ENCODE measurements at regions of chr7 and their contacts with region 1.

Region 1: DNA sequence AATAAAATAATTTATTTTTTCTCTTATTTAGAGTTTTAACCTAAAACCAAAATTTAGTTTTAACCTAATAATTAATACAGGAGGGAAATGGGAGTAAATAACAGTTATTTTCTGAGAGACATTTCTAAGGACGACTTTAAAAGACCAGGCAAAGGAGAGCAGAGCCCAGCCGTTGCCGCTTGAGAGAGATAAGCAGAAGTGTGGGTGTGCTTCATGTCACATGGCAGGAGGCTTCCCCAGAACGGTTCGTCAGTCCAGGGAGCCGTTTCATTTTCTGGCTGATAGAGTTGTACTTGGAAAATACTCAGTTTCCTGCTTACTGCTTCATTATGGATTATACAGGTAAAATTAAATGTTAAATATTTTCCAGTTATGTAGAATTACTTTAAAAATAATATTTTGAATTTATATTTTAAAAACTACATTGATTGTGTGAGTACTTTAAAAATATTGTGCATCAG is 61.4 kb downstream of the ST7 start:
- DNase-seq: peak; percentile 27 to 69
- ATAC-seq: peak in 7 of 8 donors; percentile 87 to 95 (median 93)
- H3K4me3 ChIP-seq: peak overlapping the region in 6 of 10 donors; percentile 10 to 43 (median 16)
- H3K27ac ChIP-seq: peak overlapping the region in 8 of 10 donors; percentile 9 to 60 (median 34)
- H3K4me1 ChIP-seq: peaks cover 0 to 80% (median 28%) of the 10 kb centered on the region in 9 donors
- H3K27me3 ChIP-seq: no peaks in the 10 kb centered on the region
- CTCF ChIP-seq: no peak

Region 2: DNA sequence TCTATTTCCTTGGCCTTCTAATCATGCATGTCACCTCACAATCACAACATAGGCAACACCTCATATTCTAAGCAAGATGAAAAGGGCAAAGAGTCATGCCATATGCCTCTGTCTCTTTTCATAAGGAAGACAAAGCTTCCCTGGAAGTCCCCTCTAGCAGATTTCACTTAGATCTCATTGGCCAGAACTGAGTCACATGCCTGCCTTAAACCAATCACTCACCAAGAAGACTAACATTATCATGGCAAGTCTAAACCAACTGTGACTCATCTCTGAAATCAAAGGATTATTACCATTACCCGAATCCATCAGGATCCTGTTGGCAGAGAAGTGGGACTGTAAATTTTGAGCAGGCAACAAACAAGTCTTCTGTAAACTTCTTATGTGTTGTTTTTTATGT is 462.1 kb before region 1 on chr7:
- intact Hi-C with region 1: no loop called
- DNase-seq: no peak
- ATAC-seq: no peak
- H3K4me3 ChIP-seq: no peak overlapping the region
- H3K27ac ChIP-seq: peak overlapping the region in 5 of 10 donors; percentile 19 to 70 (median 31)
- H3K4me1 ChIP-seq: peaks cover 10 to 98% (median 79%) of the 10 kb centered on the region in 9 donors
- H3K27me3 ChIP-seq: no peaks in the 10 kb centered on the region
- CTCF ChIP-seq: no peak

Region 3: DNA sequence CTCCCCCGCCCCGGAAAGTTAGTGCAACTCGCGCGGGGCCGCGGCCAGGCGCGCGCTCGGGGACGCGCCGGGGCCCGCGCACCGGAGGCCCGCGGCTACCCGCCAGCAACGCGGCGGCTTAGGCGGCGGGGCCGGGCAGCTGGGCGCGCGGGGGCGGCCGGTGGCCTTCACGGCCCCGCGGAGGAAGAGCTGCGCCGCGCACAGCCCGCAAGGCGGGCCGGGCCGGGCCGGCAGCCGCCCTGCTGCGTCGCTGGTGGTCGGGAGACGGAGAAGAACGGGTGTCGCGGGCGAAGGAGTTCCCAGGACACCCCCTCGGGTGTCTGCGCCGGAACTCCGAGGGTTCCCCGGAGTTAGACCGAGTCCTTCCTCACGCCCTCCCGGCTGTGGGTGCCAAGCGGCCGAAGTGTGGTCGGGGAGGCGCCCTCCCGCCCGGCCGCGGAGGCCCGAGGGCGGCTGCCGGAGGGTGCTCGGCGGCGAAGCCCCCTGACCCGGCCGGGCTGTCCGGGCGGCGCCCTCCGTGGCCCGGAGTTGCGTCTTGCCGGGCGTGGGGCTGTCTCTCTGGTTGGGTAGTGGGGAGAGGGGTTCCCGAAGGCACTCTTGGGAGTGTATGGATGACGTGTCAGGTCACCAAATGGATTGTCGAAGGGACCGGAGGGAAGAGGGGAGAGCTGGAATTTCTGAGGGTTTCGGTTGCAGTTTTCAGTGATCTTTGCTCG is 60.8 kb before region 1 on chr7:
- intact Hi-C with region 1: loop called in 1 of 10 experiments (anchors 5 kb)
- DNase-seq: peak; percentile 59 to 70
- ATAC-seq: peak; percentile 59 to 80 (median 70)
- H3K4me3 ChIP-seq: peak overlapping the region; percentile 77 to 95 (median 84)
- H3K27ac ChIP-seq: peak overlapping the region; percentile 98 to 100 (median 99)
- H3K4me1 ChIP-seq: peaks cover 0 to 48% (median 35%) of the 10 kb centered on the region in 9 donors
- H3K27me3 ChIP-seq: no peaks in the 10 kb centered on the region
- CTCF ChIP-seq: no peak

Measured in heart right ventricle (tissue), 16 donors.